Activated CD4-positive, alpha-beta memory T cell treated with anti-CD3 and anti-CD28 coated beads, Interleukin-2, amount 10 ng/mL, durations not matched to agents 7 days and 5 days (primary cell): ENCODE measurements at regions of chr11 and their contacts with region 1.

Region 1: DNA sequence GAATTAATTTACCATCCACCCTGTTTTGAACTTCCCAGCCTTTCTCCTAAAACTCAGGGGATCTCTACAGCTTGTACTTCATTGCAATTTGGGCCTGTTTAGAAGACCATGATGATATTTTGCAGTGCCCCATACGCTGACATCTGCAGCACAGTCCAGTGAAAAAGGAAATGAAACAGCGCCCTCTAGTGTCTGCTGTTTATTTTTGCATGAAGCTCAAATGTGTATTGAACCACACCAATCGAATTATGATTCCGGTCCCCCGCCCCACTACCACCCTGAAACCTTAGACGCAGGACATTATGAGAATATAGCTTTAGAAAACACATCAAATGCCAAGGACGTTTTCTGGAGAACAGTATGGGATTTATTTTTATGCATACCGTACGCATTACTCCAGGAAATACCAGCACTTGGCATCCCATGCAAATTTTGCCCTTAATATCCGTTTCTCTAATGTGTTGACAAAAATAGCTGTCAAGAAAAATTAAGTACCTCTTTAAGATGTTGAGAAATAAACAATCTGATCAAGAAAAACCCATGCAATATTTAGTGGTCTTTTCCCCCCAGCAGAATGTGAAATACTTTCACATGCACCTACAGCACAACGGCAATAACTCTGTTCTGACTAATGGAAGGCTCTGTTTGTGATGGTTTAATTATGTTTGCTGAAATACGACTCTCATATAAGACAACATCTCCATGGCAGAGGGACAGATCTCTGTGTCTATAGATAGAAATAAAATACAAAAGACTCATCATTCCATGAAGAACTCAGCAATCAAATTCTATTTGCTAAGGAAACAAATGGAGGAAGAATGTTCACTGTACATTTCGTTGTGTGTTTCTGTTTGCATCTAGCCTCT is 93.9 kb downstream of the TECTA start:
- DNase-seq: peak; percentile 54
- H3K4me3 Mint-ChIP-seq: no peak overlapping the region
- H3K27ac Mint-ChIP-seq: no peak overlapping the region
- H3K4me1 Mint-ChIP-seq: no peaks in the 10 kb centered on the region
- H3K27me3 Mint-ChIP-seq: peaks cover 16% of the 10 kb centered on the region

Region 2: DNA sequence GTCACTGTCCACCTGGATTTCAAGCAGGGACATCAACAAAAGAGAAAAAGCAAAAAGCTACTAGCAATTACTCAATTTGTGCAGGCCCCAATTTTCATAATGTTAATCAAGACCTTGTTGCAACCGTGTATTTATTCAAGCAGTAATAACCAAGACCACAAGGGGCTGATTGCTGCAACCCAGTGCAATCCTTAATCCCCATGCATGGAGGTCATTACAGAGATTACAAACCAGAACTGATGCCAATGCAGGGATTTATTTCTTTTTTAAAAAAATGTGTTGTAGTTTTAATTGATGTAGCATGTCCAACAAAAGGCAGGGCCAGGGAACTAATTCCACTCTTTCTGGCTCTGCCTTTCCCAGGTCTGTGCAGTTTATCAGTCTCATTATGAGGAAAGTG is 75.5 kb before region 1 on chr11:
- CTCF ChIA-PET with region 1: no interaction called
- POLR2A ChIA-PET with region 1: no interaction called
- DNase-seq: no peak
- H3K4me3 Mint-ChIP-seq: no peak overlapping the region
- H3K27ac Mint-ChIP-seq: no peak overlapping the region
- H3K4me1 Mint-ChIP-seq: no peaks in the 10 kb centered on the region
- H3K27me3 Mint-ChIP-seq: peaks cover 6% of the 10 kb centered on the region

Region 3: GRCh38 chr11:121163658-121164308 is 31.2 kb before region 1 on chr11:
- CTCF ChIA-PET with region 1: interaction called, 10 read pairs
- POLR2A ChIA-PET with region 1: no interaction called
- DNase-seq: no peak
- H3K4me3 Mint-ChIP-seq: no peak overlapping the region
- H3K27ac Mint-ChIP-seq: no peak overlapping the region
- H3K4me1 Mint-ChIP-seq: peaks cover 8% of the 10 kb centered on the region
- H3K27me3 Mint-ChIP-seq: peaks cover 6% of the 10 kb centered on the region

Region 4: GRCh38 chr11:121207485-121208115 is 12.6 kb after region 1 on chr11:
- CTCF ChIA-PET with region 1: interaction called, 12 read pairs
- POLR2A ChIA-PET with region 1: no interaction called
- DNase-seq: no peak
- H3K4me3 Mint-ChIP-seq: no peak overlapping the region
- H3K27ac Mint-ChIP-seq: no peak overlapping the region
- H3K4me1 Mint-ChIP-seq: no peaks in the 10 kb centered on the region
- H3K27me3 Mint-ChIP-seq: peaks cover 26% of the 10 kb centered on the region